Activated CD8-positive, alpha-beta T cell treated with anti-CD3 and anti-CD28 coated beads, Interleukin-2, amount 10 ng/mL, durations not matched to agents 7 days and 5 days (primary cell): ENCODE measurements at regions of chr12 and their contacts with region 1.

Region 1: DNA sequence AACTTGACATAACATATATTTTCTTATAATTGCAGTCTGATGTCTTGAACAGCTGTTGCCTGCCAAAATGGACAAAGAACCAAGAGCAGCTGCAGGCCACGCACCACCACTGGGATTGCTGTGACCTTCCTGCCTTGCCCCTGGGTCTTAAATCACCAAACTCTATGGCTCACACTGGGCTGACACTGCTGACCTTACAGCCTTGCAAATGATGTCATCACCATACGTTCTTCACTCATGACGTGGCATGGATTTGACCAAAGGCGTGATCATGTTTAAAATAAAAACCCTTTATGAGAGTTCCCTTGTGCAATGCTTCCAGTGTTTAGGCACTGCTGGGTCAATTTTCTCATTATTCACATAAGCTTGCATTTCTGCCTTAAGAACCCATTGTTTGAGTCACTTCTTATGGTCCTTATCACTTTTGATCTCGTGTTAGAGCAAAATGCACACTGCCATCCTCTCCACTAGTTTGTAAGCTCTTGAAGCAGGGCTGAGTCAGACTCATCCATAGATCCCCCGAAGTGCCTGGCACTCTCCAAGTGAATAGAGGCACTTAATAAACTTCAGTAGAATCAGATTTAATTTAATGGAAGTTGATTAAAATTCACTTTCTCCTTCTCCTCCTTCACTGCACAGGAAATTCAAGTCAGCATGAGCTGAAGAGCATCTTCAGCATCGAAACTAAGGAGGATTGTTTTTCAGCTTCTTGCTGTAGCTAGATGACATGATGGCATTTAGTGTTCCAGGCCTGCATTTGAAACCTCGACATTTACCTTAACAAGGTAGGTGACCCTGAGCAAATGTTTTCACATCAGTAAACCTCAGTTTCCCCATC is 132.4 kb upstream of the PZP start:
- DNase-seq: no peak
- ATAC-seq: peak; percentile 68
- H3K4me3 Mint-ChIP-seq: no peak overlapping the region
- H3K27ac Mint-ChIP-seq: peak overlapping the region; percentile 80
- H3K4me1 Mint-ChIP-seq: peaks cover 30% of the 10 kb centered on the region
- H3K27me3 Mint-ChIP-seq: no peaks in the 10 kb centered on the region

Region 2: GRCh38 chr12:9464408-9464807 is 123.8 kb after region 1 on chr12:
- CTCF ChIA-PET with region 1: interaction called, 13 read pairs
- POLR2A ChIA-PET with region 1: no interaction called
- DNase-seq: no peak
- ATAC-seq: no peak
- H3K4me3 Mint-ChIP-seq: no peak overlapping the region
- H3K27ac Mint-ChIP-seq: no peak overlapping the region
- H3K4me1 Mint-ChIP-seq: peaks cover 13% of the 10 kb centered on the region
- H3K27me3 Mint-ChIP-seq: no peaks in the 10 kb centered on the region